Endothelial cell of umbilical vein (primary cell): ENCODE measurements at regions of chr3 and their contacts with region 1.

Region 1: DNA sequence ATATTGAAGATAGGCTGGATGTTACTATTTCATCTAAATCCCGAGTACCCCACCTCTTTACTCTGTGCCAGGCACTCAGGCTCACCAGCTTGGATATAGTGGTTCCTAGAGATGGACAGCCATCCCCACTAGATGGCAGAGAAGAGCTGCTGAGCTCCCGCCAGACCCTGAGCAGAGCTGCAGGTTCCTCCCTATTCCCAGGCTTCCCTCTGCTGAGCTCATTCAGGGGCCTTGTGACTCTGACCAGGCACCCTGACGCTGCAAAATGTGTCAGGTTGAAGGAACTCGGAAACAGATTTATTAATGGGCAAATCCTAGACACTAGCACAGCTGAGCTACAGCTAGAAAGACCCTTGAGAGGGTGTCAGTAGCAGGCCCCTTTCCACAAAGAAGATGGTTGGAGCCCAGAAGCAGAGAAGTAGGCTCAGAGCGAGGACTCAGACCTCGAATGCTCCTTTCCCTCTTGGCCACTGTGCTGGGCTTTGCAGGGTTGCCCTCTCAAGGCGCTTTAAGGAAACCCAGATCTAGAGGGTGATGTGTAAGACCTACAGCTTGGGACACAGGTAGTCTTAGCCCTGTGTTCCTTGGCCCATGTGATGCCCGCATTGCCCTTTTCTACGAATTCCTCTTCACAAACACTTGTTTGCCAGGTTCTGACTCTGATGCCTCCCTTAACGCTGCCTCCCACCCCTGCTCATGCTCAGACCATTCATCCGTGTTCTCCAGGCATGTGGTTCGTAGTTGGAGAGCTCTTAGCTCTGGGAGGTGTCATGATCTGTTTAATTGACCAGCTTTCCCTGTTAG is 38.0 kb upstream of the RHO start:
- DNase-seq: peak; percentile 90
- H3K4me3 ChIP-seq: no peak overlapping the region
- H3K27ac ChIP-seq: peak overlapping the region; percentile 81
- H3K4me1 ChIP-seq: peaks cover 23% of the 10 kb centered on the region
- H3K27me3 ChIP-seq: no peaks in the 10 kb centered on the region
- CTCF ChIP-seq: peak; percentile 86 to 90
- POLR2A ChIP-seq: no peak

Region 2: GRCh38 chr3:129560901-129561594 is 70.6 kb after region 1 on chr3:
- CTCF ChIA-PET with region 1: interaction called, 80 read pairs
- POLR2A ChIA-PET with region 1: interaction called, 3 read pairs
- dilution Hi-C with region 1: no loop called
- intact Hi-C with region 1: loop called (anchors 1 kb)
- DNase-seq: peak; percentile 82
- H3K4me3 ChIP-seq: no peak overlapping the region
- H3K27ac ChIP-seq: peak overlapping the region; percentile 26
- H3K4me1 ChIP-seq: peaks cover 42% of the 10 kb centered on the region
- H3K27me3 ChIP-seq: no peaks in the 10 kb centered on the region
- CTCF ChIP-seq: no peak
- POLR2A ChIP-seq: peak; percentile 44

Region 3: GRCh38 chr3:129582799-129583198 is 92.4 kb after region 1 on chr3:
- CTCF ChIA-PET with region 1: interaction called, 14 read pairs
- POLR2A ChIA-PET with region 1: no interaction called
- dilution Hi-C with region 1: no loop called
- intact Hi-C with region 1: no loop called
- DNase-seq: no peak
- H3K4me3 ChIP-seq: no peak overlapping the region
- H3K27ac ChIP-seq: no peak overlapping the region
- H3K4me1 ChIP-seq: peaks cover 3% of the 10 kb centered on the region
- H3K27me3 ChIP-seq: no peaks in the 10 kb centered on the region
- CTCF ChIP-seq: no peak
- POLR2A ChIP-seq: no peak

Region 4: GRCh38 chr3:129606636-129607390 is 116.4 kb after region 1 on chr3 and contains the start of gene PLXND1:
- CTCF ChIA-PET with region 1: interaction called, 22 read pairs
- POLR2A ChIA-PET with region 1: no interaction called
- dilution Hi-C with region 1: no loop called
- intact Hi-C with region 1: no loop called
- DNase-seq: peak; percentile 81
- H3K4me3 ChIP-seq: peak within 1 kb of the TSS; percentile 36 to 87 (median 63)
- H3K27ac ChIP-seq: peak within 1 kb of the TSS; percentile 85
- H3K4me1 ChIP-seq: peaks cover 54% of the 10 kb centered on the region
- H3K27me3 ChIP-seq: no peaks in the 10 kb centered on the region
- CTCF ChIP-seq: no peak
- POLR2A ChIP-seq: peak; percentile 79
- total RNA-seq, gene PLXND1: 834 and 860 TPM in 2 replicates

Region 5: GRCh38 chr3:129824926-129825541 is 334.6 kb after region 1 on chr3:
- CTCF ChIA-PET with region 1: interaction called, 51 read pairs
- POLR2A ChIA-PET with region 1: no interaction called
- dilution Hi-C with region 1: no loop called
- intact Hi-C with region 1: loop called (anchors 1 kb)
- DNase-seq: peak; percentile 59
- H3K4me3 ChIP-seq: no peak overlapping the region
- H3K27ac ChIP-seq: no peak overlapping the region
- H3K4me1 ChIP-seq: peaks cover 6% of the 10 kb centered on the region
- H3K27me3 ChIP-seq: no peaks in the 10 kb centered on the region
- CTCF ChIP-seq: peak; percentile 51 to 54
- POLR2A ChIP-seq: no peak

Region 6: DNA sequence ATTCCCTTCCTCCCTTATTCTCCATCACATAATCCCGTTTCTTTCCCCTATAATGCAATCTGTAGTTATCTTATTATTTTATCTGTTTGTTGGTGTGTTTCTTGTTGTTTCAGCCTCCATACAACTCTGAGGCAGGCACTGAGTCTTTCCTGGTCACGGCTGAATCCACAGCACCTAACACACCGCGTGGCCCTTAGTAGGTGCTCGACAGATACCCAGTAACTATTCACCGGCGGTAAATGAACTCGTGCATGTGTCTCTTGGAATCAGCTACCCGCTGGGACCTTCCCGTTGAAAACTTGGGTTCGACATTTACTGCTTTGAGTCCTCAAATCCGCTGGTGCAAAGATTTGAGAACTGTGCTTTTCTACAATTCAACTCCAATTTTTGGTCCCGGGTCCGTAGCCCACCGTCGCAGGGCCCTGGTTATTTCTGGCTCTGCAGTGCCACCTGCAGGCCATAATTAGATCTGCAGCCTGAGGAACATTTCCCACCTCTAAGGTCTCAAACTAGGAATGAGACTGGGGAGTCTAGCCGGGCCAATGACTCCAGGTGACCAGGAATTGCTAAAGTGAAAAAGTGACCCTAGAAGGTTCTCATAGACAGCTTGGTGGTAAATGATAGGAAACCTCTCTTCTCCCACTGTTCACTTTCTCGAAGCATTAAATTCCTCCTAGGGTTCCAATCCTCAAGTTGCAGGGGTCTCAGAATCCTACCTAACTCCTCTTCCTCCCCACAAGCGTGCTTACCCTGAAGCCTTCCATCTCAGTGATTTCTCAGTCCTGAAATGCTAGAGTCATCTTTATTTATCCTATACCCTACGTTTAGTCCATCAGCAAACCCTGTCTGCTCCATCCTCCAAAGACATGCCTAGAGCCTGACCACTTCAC is 444.0 kb after region 1 on chr3:
- CTCF ChIA-PET with region 1: interaction called, 4 read pairs
- POLR2A ChIA-PET with region 1: no interaction called
- dilution Hi-C with region 1: no loop called
- intact Hi-C with region 1: loop called (anchors 1 kb)
- DNase-seq: peak; percentile 47
- H3K4me3 ChIP-seq: no peak overlapping the region
- H3K27ac ChIP-seq: no peak overlapping the region
- H3K4me1 ChIP-seq: peaks cover 3% of the 10 kb centered on the region
- H3K27me3 ChIP-seq: peaks cover 0 to 8% of the 10 kb centered on the region in 2 experiments
- CTCF ChIP-seq: peak; percentile 73 to 88
- POLR2A ChIP-seq: no peak